Sciatic nerve (tissue), 2 donors: ENCODE measurements at regions of chr10 and their contacts with region 1.

Region 1: DNA sequence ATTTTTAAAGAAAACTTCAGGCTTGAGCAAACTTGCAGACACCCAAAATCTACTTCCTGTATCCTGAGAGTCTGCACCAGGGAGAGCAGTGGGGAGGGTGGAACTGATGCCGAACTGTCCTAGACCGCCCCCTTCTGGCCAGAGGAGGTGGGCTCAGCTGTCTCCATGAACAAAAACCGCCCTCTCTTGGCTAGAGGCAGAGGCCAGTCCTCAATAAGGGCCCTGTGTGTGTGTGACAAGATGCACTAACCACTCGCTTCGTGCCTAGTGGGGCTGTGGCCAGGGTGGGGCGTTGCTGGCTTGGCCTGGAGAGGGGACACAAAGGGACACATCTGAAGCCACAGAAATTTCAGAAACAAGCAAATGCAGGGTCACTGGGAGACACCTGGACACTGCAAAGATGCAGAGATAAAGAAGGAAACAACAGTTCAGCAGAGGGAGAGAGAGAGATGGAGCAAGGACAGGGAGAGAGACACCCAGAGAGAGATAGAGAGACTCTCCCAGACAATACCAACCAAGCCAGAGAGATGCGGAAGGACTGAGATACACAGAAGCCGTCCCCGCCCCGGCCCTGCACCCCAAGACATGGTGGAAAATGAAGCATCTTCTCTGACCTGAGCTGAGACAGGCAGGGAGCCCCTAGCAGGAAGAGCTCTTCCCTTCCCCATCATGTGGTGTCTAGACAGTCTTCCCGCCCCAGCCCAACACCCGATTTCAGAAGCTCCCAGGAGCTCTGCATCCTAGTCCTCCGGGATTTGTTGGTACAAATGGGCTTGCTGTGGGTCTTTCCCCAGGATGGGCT is 22.7 kb upstream of the FXYD4 start:
- DNase-seq: peak; percentile 91
- ATAC-seq: peak; percentile 97

Region 2: DNA sequence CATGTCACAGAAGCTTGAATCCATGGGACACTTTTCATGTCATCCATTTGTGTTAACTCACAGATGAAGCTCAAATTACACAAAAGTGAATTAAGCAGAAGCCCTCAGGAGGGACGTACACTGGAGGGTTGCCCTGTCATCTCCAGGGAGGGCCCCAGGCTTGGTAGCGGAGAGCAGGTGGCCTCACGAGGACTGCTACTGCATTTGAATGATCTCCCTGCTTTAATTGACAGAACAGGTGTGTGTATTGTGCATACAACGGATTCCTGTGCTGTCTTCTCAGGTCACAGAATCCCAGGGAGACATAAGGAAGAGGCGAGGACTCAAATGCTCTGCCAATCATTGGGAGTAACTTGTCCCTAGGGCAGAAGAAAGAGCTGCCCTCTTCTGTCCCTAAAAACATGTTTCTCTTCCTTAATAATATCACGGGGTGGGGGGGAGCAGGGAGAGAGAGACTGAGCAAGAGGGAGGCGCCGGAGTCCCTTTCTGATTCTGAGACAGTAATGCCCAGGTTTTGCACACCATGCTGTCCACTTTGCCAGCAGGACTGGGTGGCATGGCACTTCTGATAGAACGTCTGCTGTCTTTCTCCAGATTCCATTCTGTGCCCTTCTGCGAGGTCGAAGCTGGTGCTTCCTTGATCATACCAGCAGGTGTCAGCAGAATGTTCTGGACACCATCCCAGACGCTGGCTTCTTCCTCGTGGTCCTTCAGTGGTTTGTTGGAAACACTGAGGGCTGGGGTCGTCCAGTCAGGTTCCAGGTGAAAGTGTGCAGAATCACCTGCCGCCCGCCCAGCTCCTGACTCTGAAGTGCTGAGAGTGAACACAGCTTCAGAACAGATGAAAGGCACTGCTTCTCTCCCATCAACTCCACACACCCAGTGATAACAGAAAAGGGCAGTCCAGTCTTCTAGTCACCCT is 55.7 kb before region 1 on chr10:
- intact Hi-C with region 1: loop called (anchors 5 kb)
- DNase-seq: peak; percentile 71
- ATAC-seq: peak; percentile 88

Region 3: GRCh38 chr10:43420369-43421200 is 71.9 kb after region 1 on chr10:
- intact Hi-C with region 1: no loop called
- DNase-seq: peak; percentile 93
- ATAC-seq: peak; percentile 96